ENCODE measurements at regions of chr1 and their contacts with region 1.

Region 1: DNA sequence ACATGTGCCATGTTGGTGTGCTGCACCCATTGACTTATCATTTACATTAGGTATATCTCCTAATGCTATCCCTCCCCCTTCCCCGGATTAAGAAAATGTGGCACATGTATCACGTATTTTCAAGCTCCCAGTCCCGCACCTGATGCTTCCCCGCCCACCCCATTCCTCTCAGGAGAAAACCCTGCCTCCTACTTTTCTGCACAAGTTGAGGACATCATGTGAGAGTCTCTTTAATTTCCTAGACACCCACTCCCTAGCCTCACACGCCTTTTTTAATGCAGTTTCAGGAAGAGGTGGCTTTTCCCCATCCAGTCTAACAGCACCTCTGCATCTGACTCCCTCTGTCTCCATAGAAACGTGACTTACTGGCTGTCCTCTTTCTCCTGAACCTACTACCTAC is 58.2 kb upstream of the GOLT1A start:
- DNase-seq: no peak
- H3K4me3 ChIP-seq: no peak overlapping the region
- H3K27ac ChIP-seq: no peak overlapping the region
- H3K4me1 ChIP-seq: peaks cover 12% of the 10 kb centered on the region
- H3K27me3 ChIP-seq: no peaks in the 10 kb centered on the region
- CTCF ChIP-seq: no peak
- POLR2A ChIP-seq: no peak

Region 2: DNA sequence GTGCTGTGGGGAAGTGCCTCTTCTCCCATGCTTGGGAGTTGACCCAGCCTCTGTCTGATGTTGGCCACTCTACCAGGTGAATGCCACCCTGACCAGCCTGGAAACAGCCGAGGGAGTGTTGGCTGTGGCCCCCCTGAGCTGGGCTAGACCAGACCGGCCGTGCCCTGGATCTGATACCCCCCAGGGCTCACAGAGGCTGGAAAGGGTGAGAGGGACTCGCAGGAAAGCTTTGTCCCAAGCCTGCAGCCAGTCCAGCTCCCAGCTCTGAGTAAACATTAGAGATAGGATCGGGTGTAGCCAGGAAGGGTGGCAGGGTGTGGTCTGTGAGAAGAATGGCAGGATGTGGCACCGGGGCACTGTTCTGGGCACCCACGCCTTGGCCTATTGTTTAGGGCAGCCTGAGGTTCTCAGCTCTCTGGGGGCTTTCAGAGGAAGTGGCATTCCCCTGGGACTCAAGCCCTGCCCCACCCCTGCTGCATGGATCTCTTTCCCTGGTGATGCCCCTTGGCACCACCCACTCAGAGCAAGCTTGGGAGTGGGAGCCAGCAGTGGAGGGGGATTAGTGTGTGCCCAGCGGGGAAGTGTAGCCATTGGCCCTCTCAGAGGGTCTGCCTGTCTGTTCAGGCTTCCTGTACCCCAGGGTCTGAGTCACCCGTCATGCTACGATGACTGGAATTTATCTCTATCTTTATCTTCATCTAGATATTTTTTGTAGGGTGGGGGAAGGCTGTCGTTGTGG is 167.7 kb before region 1 on chr1:
- intact Hi-C with region 1: no loop called
- DNase-seq: no peak
- H3K4me3 ChIP-seq: no peak overlapping the region
- H3K27ac ChIP-seq: no peak overlapping the region
- H3K4me1 ChIP-seq: peaks cover 3% of the 10 kb centered on the region
- H3K27me3 ChIP-seq: no peaks in the 10 kb centered on the region
- CTCF ChIP-seq: no peak
- POLR2A ChIP-seq: no peak

Region 3: GRCh38 chr1:204232526-204232925 is 39.4 kb before region 1 on chr1:
- intact Hi-C with region 1: loop called (anchors 2 kb)
- DNase-seq: no peak
- H3K4me3 ChIP-seq: no peak overlapping the region
- H3K27ac ChIP-seq: no peak overlapping the region
- H3K4me1 ChIP-seq: no peaks in the 10 kb centered on the region
- H3K27me3 ChIP-seq: no peaks in the 10 kb centered on the region
- CTCF ChIP-seq: no peak
- POLR2A ChIP-seq: no peak

Measured in testis (tissue), 5 donors.